ENCODE measurements at regions of chr11 and their contacts with region 1.

Region 1: GRCh38 chr11:73760679-73761402 is at the start of gene RAB6A:
- DNase-seq: peak; percentile 100
- H3K4me3 Mint-ChIP-seq: peak within 1 kb of the TSS; percentile 93
- H3K27ac Mint-ChIP-seq: peak within 1 kb of the TSS; percentile 95
- H3K4me1 Mint-ChIP-seq: peaks cover 26% of the 10 kb centered on the region
- H3K27me3 Mint-ChIP-seq: peaks cover 5% of the 10 kb centered on the region
- total RNA-seq, gene RAB6A: 74.6 and 89.5 TPM in 2 replicates

Region 2: GRCh38 chr11:73787643-73788537 is 27.0 kb after region 1 on chr11 and contains the start of gene MRPL48:
- intact Hi-C with region 1: no loop called
- DNase-seq: peak; percentile 87
- H3K4me3 Mint-ChIP-seq: peak within 1 kb of the TSS; percentile 98
- H3K27ac Mint-ChIP-seq: peak within 1 kb of the TSS; percentile 98
- H3K4me1 Mint-ChIP-seq: peaks cover 17% of the 10 kb centered on the region
- H3K27me3 Mint-ChIP-seq: no peaks in the 10 kb centered on the region
- total RNA-seq, gene MRPL48: 63.1 and 67.1 TPM in 2 replicates

Region 3: GRCh38 chr11:73876424-73877300 is 115.8 kb after region 1 on chr11 and contains the starts of genes COA4 and PAAF1:
- intact Hi-C with region 1: loop called (anchors 1 kb)
- DNase-seq: peak; percentile 93
- H3K4me3 Mint-ChIP-seq: peak within 1 kb of the TSS; percentile 98
- H3K27ac Mint-ChIP-seq: peak within 1 kb of the TSS; percentile 96
- H3K4me1 Mint-ChIP-seq: peaks cover 19% of the 10 kb centered on the region
- H3K27me3 Mint-ChIP-seq: no peaks in the 10 kb centered on the region
- total RNA-seq, gene COA4: 90.2 and 99.9 TPM in 2 replicates
- total RNA-seq, gene PAAF1: 25.4 and 28.7 TPM in 2 replicates